MCF 10A (cell line): ENCODE measurements at regions of chr5 and their contacts with region 1.

Region 1: GRCh38 chr5:157130925-157131324 is 11.7 kb downstream of the MED7 start:
- DNase-seq: no peak
- H3K4me3 Mint-ChIP-seq: no peak overlapping the region
- H3K27ac Mint-ChIP-seq: no peak overlapping the region
- H3K4me1 Mint-ChIP-seq: no peaks in the 10 kb centered on the region
- H3K27me3 Mint-ChIP-seq: no peaks in the 10 kb centered on the region
- CTCF ChIP-seq: no peak

Region 2: GRCh38 chr5:156394642-156395305 is 736.2 kb before region 1 on chr5:
- CTCF ChIA-PET with region 1: no interaction called
- POLR2A ChIA-PET with region 1: no interaction called
- intact Hi-C with region 1: loop called (anchors 10 kb)
- DNase-seq: peak; percentile 79
- H3K4me3 Mint-ChIP-seq: no peak overlapping the region
- H3K27ac Mint-ChIP-seq: no peak overlapping the region
- H3K4me1 Mint-ChIP-seq: peaks cover 54% of the 10 kb centered on the region
- H3K27me3 Mint-ChIP-seq: no peaks in the 10 kb centered on the region
- CTCF ChIP-seq: no peak

Region 3: DNA sequence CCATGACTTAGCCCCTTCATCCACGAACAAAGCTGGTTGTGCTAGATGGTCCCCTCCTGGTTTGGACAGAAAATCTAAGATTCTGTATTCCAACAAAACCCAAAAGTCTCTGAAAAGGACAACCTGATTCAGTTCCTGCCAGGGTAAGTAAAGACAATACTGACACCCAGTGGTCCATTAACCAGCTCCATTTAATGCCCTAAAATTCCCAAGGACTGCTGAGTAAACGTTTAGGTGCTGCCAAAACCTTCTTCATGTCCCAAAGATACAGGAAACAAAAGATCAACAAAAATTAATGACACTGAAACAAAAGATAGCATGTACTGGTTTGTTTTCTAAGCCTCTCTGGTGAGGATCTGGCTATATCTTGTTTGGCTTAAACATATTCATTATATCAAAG is 306.1 kb before region 1 on chr5:
- CTCF ChIA-PET with region 1: interaction called, 16 read pairs
- POLR2A ChIA-PET with region 1: interaction called, 3 read pairs
- intact Hi-C with region 1: loop called (anchors 1 kb)
- DNase-seq: peak; percentile 8
- H3K4me3 Mint-ChIP-seq: no peak overlapping the region
- H3K27ac Mint-ChIP-seq: no peak overlapping the region
- H3K4me1 Mint-ChIP-seq: peaks cover 4% of the 10 kb centered on the region
- H3K27me3 Mint-ChIP-seq: no peaks in the 10 kb centered on the region
- CTCF ChIP-seq: peak; percentile 84

Region 4: DNA sequence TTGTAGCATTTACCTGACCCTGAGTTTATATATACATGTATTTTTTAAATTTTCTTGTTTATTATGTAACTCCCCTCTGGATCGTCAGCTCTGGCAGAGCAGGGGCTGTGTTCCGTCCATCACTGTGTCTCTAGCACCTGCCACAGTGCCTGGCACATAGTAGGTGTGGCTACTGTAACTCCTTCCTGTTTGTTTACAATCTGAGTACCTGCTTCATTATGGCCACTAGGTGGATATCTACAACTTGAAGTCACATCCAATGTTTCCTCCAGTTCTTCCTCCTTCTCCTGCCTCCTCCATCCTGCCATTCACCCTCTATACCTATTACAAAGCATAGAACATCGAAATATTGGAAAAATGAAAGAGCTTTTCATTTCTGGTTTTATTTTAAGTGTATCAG is 295.0 kb before region 1 on chr5:
- CTCF ChIA-PET with region 1: interaction called, 15 read pairs
- POLR2A ChIA-PET with region 1: no interaction called
- intact Hi-C with region 1: loop called (anchors 2 kb)
- DNase-seq: no peak
- H3K4me3 Mint-ChIP-seq: no peak overlapping the region
- H3K27ac Mint-ChIP-seq: no peak overlapping the region
- H3K4me1 Mint-ChIP-seq: peaks cover 4% of the 10 kb centered on the region
- H3K27me3 Mint-ChIP-seq: no peaks in the 10 kb centered on the region
- CTCF ChIP-seq: peak; percentile 43

Region 5: DNA sequence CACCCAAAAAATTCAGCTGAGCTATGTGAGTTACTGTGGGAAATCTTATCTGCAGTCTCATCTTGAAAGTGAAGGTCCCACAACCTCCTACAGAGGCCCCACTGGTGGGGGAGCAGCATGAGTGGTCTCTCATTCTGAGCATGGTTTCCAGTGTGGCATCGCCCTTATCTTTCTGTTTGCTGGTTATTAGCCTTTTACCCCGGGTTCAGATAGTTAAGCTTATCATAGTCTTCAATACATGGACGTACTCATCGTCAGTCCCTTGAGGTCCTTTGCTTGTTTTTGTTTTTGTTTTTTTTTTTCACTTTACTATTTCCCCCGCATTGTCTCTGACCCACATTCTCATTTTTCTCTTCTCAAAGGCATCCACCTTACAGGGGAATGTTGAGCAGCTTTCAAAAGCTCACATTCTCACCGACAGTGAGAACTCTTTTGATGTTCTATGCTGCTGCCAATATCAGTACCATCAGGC is 14.4 kb before region 1 on chr5:
- CTCF ChIA-PET with region 1: interaction called, 23 read pairs
- POLR2A ChIA-PET with region 1: interaction called, 3 read pairs
- intact Hi-C with region 1: no loop called
- DNase-seq: no peak
- H3K4me3 Mint-ChIP-seq: no peak overlapping the region
- H3K27ac Mint-ChIP-seq: no peak overlapping the region
- H3K4me1 Mint-ChIP-seq: no peaks in the 10 kb centered on the region
- H3K27me3 Mint-ChIP-seq: no peaks in the 10 kb centered on the region
- CTCF ChIP-seq: no peak

Region 6: GRCh38 chr5:157142317-157143126 is 11.6 kb after region 1 on chr5 and contains the start of gene MED7:
- CTCF ChIA-PET with region 1: interaction called, 22 read pairs
- POLR2A ChIA-PET with region 1: interaction called, 19 read pairs
- intact Hi-C with region 1: no loop called
- DNase-seq: peak; percentile 100
- H3K4me3 Mint-ChIP-seq: peak within 1 kb of the TSS; percentile 83
- H3K27ac Mint-ChIP-seq: peak within 1 kb of the TSS; percentile 94
- H3K4me1 Mint-ChIP-seq: peaks cover 7% of the 10 kb centered on the region
- H3K27me3 Mint-ChIP-seq: no peaks in the 10 kb centered on the region
- CTCF ChIP-seq: no peak
- total RNA-seq, gene MED7: 14.7 and 16.9 TPM in 2 replicates